Activated CD8-positive, alpha-beta T cell treated with anti-CD3 and anti-CD28 coated beads for 36 hours (primary cell): ENCODE measurements at regions of chr1 and their contacts with region 1.

Region 1: DNA sequence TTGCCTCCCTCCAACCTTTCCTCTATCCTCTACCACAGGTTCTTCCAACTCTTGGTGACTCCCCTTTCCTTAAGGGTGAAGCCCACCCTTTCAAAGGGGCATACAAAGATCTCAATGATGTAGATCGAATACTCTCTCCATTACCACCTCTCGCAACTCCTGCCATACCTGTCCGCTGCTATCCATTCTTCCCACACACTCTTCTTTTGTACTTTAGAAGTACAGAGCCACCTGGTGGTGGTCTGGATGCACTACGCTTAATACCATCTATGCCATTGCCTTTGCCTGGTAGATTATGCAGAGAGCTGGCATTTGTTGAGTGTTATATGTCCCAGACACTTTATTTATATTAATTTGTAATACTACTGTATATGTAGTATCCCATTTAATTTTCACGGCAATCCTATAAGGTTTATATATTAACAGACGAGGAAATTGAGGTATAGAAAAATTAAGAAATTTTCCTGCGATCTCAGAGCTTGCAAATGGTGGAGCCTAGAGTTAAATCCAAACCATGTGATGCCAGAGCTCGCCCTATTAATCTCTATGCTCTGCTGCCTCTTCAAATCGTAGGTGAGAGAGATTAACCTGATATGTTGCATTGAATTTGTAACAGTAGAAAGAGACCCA is 22.9 kb downstream of the TSHB start:
- DNase-seq: peak; percentile 81
- ATAC-seq: peak; percentile 89
- H3K4me3 Mint-ChIP-seq: no peak overlapping the region
- H3K27ac Mint-ChIP-seq: no peak overlapping the region
- H3K4me1 Mint-ChIP-seq: peaks cover 7% of the 10 kb centered on the region
- H3K27me3 Mint-ChIP-seq: no peaks in the 10 kb centered on the region
- CTCF ChIP-seq: peak; percentile 93

Region 2: GRCh38 chr1:114868766-114869165 is 183.8 kb before region 1 on chr1:
- CTCF ChIA-PET with region 1: no interaction called
- POLR2A ChIA-PET with region 1: no interaction called
- intact Hi-C with region 1: no loop called
- DNase-seq: no peak
- ATAC-seq: no peak
- H3K4me3 Mint-ChIP-seq: no peak overlapping the region
- H3K27ac Mint-ChIP-seq: no peak overlapping the region
- H3K4me1 Mint-ChIP-seq: no peaks in the 10 kb centered on the region
- H3K27me3 Mint-ChIP-seq: peaks cover 7% of the 10 kb centered on the region
- CTCF ChIP-seq: no peak

Region 3: DNA sequence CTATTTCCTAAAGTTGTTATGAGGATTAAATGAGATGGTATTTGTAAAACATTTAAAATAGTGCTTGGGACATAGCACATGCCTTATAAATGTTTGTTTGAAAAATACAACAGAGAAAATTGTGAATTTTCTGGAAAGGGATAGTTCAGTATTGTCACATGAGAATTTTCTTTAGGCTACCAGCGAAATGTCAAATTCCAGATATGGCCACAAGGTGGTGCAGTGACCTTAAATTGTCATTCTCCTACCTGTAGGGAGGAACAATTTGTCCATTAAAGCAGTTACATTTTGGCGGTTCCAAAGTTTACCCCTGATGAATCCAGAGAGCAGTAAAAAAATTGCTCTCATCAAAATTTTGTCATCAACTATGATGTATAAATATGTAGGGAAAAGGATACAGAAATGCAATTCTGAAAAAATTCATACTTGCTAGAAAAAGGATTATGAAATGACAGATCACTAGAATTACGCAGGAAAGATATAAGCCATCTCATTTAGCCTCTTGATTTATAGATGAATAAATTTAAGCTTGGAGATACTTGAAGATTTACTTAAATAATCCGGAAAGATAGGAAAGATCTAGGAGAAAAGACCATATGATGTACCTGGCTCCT is 73.2 kb before region 1 on chr1:
- CTCF ChIA-PET with region 1: interaction called, 15 read pairs
- POLR2A ChIA-PET with region 1: no interaction called
- intact Hi-C with region 1: loop called (anchors 2 kb)
- DNase-seq: peak; percentile 80
- ATAC-seq: no peak
- H3K4me3 Mint-ChIP-seq: no peak overlapping the region
- H3K27ac Mint-ChIP-seq: no peak overlapping the region
- H3K4me1 Mint-ChIP-seq: no peaks in the 10 kb centered on the region
- H3K27me3 Mint-ChIP-seq: peaks cover 8% of the 10 kb centered on the region
- CTCF ChIP-seq: peak; percentile 77

Region 4: GRCh38 chr1:114986286-114986685 is 66.3 kb before region 1 on chr1:
- CTCF ChIA-PET with region 1: interaction called, 15 read pairs
- POLR2A ChIA-PET with region 1: no interaction called
- intact Hi-C with region 1: no loop called
- DNase-seq: no peak
- ATAC-seq: no peak
- H3K4me3 Mint-ChIP-seq: no peak overlapping the region
- H3K27ac Mint-ChIP-seq: no peak overlapping the region
- H3K4me1 Mint-ChIP-seq: no peaks in the 10 kb centered on the region
- H3K27me3 Mint-ChIP-seq: peaks cover 1% of the 10 kb centered on the region
- CTCF ChIP-seq: no peak

Region 5: DNA sequence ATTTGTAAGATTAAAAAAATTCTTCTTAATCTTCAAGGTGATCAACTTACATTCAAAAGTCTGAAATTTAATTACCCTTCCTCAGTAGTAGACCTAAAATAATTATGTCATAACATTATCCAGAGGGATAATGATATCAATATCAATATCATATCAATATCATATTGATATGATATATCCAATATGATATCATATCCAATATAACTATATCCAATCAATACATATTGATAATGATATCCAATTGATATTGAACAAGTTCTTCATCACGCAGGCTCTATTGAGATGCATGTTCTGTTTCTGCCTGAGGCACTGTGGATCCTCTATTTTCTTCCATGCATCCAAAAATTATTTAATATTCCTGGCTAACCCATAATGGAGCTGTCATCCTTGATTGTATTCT is 20.0 kb before region 1 on chr1:
- CTCF ChIA-PET with region 1: interaction called, 14 read pairs
- POLR2A ChIA-PET with region 1: no interaction called
- intact Hi-C with region 1: no loop called
- DNase-seq: no peak
- ATAC-seq: no peak
- H3K4me3 Mint-ChIP-seq: no peak overlapping the region
- H3K27ac Mint-ChIP-seq: no peak overlapping the region
- H3K4me1 Mint-ChIP-seq: no peaks in the 10 kb centered on the region
- H3K27me3 Mint-ChIP-seq: peaks cover 5% of the 10 kb centered on the region
- CTCF ChIP-seq: no peak

Region 6: DNA sequence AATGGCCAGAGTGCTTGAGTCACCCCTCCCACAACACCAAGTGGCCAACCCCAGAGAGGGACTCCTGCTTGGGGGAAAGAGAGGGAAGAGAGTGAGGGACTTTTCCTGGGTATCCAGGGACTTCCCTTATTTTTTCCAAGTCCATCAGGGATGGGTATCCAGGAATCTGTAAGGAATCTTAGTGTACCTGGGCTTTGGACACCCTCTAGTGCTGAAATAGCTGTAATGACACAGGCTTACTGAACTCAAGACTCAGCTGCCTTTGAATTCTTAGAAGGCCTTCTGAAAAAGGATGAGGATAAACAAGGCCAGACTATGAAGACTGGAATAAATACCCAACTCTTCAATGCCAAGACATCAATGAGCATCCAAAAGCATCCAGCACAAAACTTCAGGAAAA is 10.9 kb before region 1 on chr1:
- CTCF ChIA-PET with region 1: interaction called, 22 read pairs
- POLR2A ChIA-PET with region 1: interaction called, 3 read pairs
- intact Hi-C with region 1: no loop called
- DNase-seq: no peak
- ATAC-seq: no peak
- H3K4me3 Mint-ChIP-seq: no peak overlapping the region
- H3K27ac Mint-ChIP-seq: no peak overlapping the region
- H3K4me1 Mint-ChIP-seq: no peaks in the 10 kb centered on the region
- H3K27me3 Mint-ChIP-seq: no peaks in the 10 kb centered on the region
- CTCF ChIP-seq: no peak

Region 7: DNA sequence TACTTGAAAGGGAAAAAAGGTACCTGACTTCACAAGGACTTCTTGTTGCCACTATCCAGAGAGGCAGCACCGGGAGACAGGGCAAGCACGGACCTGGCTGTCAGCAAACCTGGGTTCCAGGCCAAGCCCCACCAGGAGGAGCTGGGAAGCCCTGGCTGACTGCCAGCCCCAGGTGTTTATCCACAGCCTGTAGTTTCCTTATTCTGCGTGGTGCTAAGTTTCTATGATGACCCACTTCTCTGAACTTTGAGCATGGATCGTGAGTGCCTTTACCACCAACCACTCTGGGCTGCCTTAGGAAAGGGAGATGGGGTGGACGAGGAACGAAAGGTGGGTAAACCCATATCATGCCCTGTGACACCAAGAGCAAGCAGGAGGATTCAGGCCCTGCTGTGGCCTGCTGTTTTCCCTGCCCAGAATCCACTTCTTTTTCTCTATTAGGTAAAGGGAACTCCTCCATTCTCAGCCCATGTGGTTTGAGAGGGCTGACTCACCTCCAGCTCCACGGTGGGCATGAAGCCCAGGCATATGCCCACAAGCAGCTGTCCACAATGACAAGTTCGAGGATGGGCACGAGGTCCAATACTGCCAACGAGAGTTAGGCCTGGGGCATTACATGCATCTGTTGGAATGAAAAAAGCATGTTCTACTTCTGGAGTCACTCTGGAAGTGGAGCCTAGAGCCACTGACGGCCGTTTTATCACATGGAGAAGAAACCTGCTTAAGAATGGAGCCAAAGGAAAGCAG is 16.4 kb after region 1 on chr1:
- CTCF ChIA-PET with region 1: interaction called, 23 read pairs
- POLR2A ChIA-PET with region 1: interaction called, 4 read pairs
- intact Hi-C with region 1: no loop called
- DNase-seq: no peak
- ATAC-seq: no peak
- H3K4me3 Mint-ChIP-seq: no peak overlapping the region
- H3K27ac Mint-ChIP-seq: no peak overlapping the region
- H3K4me1 Mint-ChIP-seq: peaks cover 53% of the 10 kb centered on the region
- H3K27me3 Mint-ChIP-seq: no peaks in the 10 kb centered on the region
- CTCF ChIP-seq: no peak

Region 8: DNA sequence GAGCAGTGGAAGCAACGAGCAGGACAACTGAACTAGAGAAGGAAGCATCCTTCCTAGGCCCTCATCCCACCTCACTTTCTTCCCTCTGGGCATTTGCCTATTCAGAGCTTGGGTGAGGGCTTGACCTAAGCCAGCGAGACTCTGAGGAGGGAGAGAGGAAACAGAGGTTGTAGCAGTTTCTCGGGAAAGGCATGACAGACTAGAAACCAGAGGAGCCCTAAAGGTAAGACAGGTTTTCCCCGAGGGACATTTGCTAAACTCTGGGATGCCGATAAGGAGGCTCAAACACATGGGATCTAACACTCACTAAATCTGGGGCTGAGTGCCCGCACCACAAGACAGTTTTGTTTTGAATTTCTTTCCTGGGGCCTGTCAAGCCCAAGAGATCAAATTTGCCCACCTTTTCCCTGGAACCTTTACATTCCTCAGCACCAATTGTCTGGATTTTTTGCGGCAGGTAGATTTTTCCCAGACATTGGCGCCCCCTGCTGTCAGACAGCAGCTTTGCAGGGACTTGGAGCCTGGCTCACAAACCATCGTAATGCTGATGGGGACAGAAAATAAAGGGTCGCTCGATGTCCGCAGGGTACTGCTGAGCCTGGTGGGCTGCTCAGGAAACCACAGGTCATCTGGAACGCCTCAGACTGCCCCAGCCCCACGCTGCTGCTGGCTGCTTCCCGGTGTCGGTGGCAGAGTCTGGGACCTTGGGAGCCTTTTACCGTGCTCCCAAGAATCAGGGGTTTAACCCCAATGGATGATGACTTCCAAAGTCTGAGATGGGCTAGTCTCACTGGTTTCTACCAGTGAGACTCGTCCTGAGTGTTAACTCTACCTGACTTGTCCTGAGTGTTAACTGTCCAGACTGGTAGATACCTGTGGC is 60.2 kb after region 1 on chr1:
- CTCF ChIA-PET with region 1: interaction called, 38 read pairs
- POLR2A ChIA-PET with region 1: no interaction called
- intact Hi-C with region 1: no loop called
- DNase-seq: peak; percentile 56
- ATAC-seq: peak; percentile 64
- H3K4me3 Mint-ChIP-seq: no peak overlapping the region
- H3K27ac Mint-ChIP-seq: no peak overlapping the region
- H3K4me1 Mint-ChIP-seq: peaks cover 8% of the 10 kb centered on the region
- H3K27me3 Mint-ChIP-seq: no peaks in the 10 kb centered on the region
- CTCF ChIP-seq: peak; percentile 99

Region 9: DNA sequence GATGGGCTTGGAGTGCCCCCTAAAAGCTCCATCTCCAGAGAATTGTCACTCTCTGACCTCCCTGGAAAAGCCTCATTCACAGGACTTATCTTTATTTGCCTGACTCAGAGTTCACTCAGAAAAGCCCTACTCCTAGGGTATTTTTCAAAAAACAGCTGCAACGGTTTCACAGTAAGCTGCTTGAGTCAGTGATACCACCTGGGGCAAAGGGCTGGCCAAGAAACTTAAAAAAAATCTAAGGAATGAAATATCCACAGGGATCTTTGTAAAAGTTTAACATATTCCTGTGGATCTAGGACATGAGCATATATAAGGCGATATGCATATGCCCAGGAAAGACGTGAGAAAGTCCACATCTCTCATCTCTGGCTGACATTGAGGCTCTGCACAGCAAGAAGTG is 70.5 kb after region 1 on chr1:
- CTCF ChIA-PET with region 1: no interaction called
- POLR2A ChIA-PET with region 1: no interaction called
- intact Hi-C with region 1: no loop called
- DNase-seq: no peak
- ATAC-seq: no peak
- H3K4me3 Mint-ChIP-seq: no peak overlapping the region
- H3K27ac Mint-ChIP-seq: no peak overlapping the region
- H3K4me1 Mint-ChIP-seq: no peaks in the 10 kb centered on the region
- H3K27me3 Mint-ChIP-seq: peaks cover 15% of the 10 kb centered on the region
- CTCF ChIP-seq: no peak

Region 10: DNA sequence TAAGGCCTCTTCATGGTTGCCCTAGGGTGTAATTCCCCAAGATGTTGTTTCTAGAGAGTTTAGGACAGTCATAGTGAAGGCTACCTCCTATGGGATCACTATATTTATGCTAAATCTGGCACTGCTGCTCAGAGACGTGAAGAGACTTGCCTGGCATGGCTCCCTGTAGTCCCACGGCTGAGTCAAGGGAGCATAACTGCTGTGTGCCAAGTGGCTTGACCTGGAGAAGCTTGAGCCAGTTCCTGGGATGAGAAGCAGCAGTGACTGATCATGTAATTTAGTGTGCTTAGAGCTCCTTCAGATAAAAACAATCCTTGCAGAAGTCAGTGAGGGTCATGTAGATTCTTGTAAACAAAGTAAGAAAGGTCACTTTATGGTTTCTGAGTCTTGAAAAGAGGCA is 105.6 kb after region 1 on chr1:
- CTCF ChIA-PET with region 1: no interaction called
- POLR2A ChIA-PET with region 1: no interaction called
- intact Hi-C with region 1: no loop called
- DNase-seq: no peak
- ATAC-seq: no peak
- H3K4me3 Mint-ChIP-seq: no peak overlapping the region
- H3K27ac Mint-ChIP-seq: no peak overlapping the region
- H3K4me1 Mint-ChIP-seq: no peaks in the 10 kb centered on the region
- H3K27me3 Mint-ChIP-seq: peaks cover 3% of the 10 kb centered on the region
- CTCF ChIP-seq: no peak

Region 11: DNA sequence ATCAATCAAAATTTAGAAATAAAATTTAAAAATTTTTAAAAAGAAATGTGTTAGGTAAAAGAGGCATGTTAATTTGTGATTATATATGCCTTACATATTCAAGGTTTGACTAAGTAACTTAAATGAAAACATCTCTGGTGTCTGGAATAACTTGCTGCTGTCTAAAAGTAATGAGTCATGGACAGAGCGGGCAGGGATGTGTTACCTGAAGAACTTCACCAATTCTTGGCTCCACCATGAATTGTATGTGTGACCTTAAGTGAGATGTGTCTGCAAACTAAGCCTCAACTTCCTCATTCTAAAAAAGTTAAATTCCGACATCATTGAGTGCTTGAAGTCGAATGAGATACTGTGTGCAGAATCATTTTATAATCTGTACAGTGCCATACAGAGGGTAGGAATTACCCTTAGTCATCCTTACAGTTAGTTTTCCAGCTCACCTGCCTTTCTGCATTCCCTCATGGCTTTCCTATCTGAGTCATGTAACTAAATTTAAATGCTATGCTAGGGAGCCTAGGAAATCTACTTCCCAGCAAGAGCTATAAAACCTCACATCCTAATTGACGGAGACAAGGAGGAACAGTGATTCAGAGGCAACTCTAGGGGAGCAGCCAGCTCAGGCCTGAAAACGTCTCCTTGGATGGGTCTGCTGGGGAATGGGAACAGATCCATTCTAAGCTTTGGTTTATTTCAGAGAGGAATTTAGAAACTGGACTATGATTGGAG is 137.4 kb after region 1 on chr1:
- CTCF ChIA-PET with region 1: no interaction called
- POLR2A ChIA-PET with region 1: no interaction called
- intact Hi-C with region 1: no loop called
- DNase-seq: no peak
- ATAC-seq: no peak
- H3K4me3 Mint-ChIP-seq: no peak overlapping the region
- H3K27ac Mint-ChIP-seq: no peak overlapping the region
- H3K4me1 Mint-ChIP-seq: peaks cover 1% of the 10 kb centered on the region
- H3K27me3 Mint-ChIP-seq: peaks cover 7% of the 10 kb centered on the region
- CTCF ChIP-seq: no peak